GM10248 (cell line): ENCODE measurements at regions of chr22 and their contacts with region 1.

Region 1: DNA sequence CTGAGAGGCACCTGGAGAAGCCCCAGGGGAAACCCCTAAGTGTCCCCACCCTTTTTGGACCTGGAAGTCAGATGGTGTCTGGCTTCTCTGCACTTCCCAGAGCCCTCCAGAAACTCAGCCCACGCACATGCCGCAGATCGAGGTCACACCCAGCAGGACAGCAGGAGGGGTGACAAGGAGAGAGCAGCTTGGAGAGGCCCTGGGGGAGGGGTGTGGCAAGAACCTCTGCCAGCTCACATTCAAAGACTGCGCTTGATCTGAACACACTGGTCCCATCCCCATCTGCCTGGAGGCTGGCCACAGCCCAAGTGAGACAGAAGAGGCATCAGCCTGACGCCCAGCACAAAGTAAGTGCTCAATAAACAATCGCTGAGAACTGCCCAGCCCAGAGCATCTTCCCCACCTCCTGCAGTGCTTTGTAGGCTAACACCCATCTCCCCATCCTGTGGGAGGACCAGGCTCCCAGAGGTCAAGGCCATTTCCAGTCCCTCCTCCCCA is 21.4 kb downstream of the TMPRSS6 start:
- DNase-seq: no peak
- CTCF ChIP-seq: no peak

Region 2: GRCh38 chr22:37077884-37078485 is 10.2 kb before region 1 on chr22:
- CTCF ChIA-PET with region 1: interaction called, 12 read pairs
- POLR2A ChIA-PET with region 1: no interaction called
- DNase-seq: peak; percentile 91
- CTCF ChIP-seq: peak; percentile 97

Region 3: GRCh38 chr22:37401401-37402183 is 313.4 kb after region 1 on chr22:
- CTCF ChIA-PET with region 1: no interaction called
- POLR2A ChIA-PET with region 1: no interaction called
- DNase-seq: no peak
- CTCF ChIP-seq: no peak